ENCODE measurements at regions of chr20 and their contacts with region 1.

Region 1: DNA sequence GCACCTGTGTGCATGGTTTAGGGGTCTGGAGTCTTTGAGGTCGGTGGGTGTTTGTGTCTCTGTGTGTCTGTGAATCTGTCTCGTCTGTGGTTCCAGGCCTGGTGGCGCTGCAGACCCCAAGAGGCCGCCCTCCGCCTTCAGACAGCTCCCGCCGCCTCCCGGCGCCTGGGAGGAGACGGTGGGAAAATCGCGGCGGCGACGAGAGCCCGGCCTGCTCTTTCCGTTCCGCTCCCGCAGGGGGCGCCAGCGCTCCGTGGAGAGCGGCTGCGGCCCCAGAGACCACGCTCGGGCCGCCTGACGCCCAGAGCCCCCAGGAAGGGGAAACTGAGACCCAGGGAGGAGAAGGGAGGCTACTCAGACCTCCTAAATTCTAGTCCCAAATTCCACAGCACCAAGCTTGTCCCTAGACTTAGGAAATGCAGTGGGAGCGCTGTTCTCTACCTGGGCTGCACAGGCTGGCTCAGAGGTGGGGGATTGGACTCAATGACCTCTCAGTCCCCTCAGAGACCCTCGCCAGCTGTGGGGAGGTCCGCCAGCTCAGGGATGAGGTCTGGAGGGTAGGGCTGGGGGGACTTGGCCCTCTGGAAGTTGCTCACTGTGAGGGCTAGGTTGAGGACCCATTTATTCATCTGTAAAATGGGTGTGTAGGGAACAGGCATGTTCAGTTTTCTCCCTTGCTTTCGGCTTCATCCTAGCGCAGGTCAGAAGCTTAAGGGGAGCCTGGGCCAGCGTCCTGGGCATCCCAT is 36.9 kb upstream of the BLCAP start:
- DNase-seq: peak; percentile 48 to 78
- H3K4me3 ChIP-seq: no peak overlapping the region
- H3K4me1 ChIP-seq: peaks cover 11% of the 10 kb centered on the region
- H3K27me3 ChIP-seq: no peaks in the 10 kb centered on the region

Region 2: GRCh38 chr20:37990571-37991151 is 426.1 kb after region 1 on chr20:
- in situ Hi-C with region 1: loop called (anchors 5 kb)
- DNase-seq: no peak
- H3K4me3 ChIP-seq: no peak overlapping the region
- H3K4me1 ChIP-seq: peaks cover 22% of the 10 kb centered on the region
- H3K27me3 ChIP-seq: no peaks in the 10 kb centered on the region

Region 3: GRCh38 chr20:38221119-38221589 is 656.6 kb after region 1 on chr20:
- in situ Hi-C with region 1: loop called (anchors 25 kb)
- DNase-seq: peak; percentile 64 to 89
- H3K4me3 ChIP-seq: no peak overlapping the region
- H3K4me1 ChIP-seq: 0 out of 2 replicates have a peak, but pooled peaks cover 2% of the 10 kb centered on the region
- H3K27me3 ChIP-seq: no peaks in the 10 kb centered on the region